Heart right ventricle (tissue), 16 donors: ENCODE measurements at regions of chr1 and their contacts with region 1.

Region 1: GRCh38 chr1:95233737-95234500 is at the start of gene RWDD3:
- DNase-seq: peak; percentile 94 to 96
- ATAC-seq: peak; percentile 95 to 98 (median 96)
- H3K4me3 ChIP-seq: peak within 1 kb of the TSS; percentile 67 to 94 (median 90)
- H3K27ac ChIP-seq: peak within 1 kb of the TSS; percentile 74 to 95 (median 92)
- H3K4me1 ChIP-seq: peaks cover 0 to 77% (median 46%) of the 10 kb centered on the region in 9 donors
- H3K27me3 ChIP-seq: no peaks in the 10 kb centered on the region
- CTCF ChIP-seq: peak; percentile 82 to 100 (median 96)
- total RNA-seq, gene RWDD3: 14.8 to 23.2 (median 18.3) TPM

Region 2: GRCh38 chr1:94854458-94855306 is 379.2 kb before region 1 on chr1:
- intact Hi-C with region 1: loop called in 3 of 10 experiments (anchors 5 to 10 kb)
- DNase-seq: peak; percentile 80 to 91
- ATAC-seq: peak; percentile 93 to 97 (median 95)
- H3K4me3 ChIP-seq: peak overlapping the region in 9 of 10 donors; percentile 18 to 56 (median 50)
- H3K27ac ChIP-seq: peak overlapping the region; percentile 14 to 81 (median 74)
- H3K4me1 ChIP-seq: peaks cover 0 to 45% (median 15%) of the 10 kb centered on the region in 9 donors
- H3K27me3 ChIP-seq: no peaks in the 10 kb centered on the region
- CTCF ChIP-seq: peak; percentile 81 to 98 (median 93)

Region 3: GRCh38 chr1:95072532-95073419 is 161.1 kb before region 1 on chr1 and contains the start of gene ALG14:
- intact Hi-C with region 1: loop called in 7 of 10 experiments (anchors 1 to 5 kb)
- DNase-seq: peak; percentile 92 to 96
- ATAC-seq: peak; percentile 98 to 99 (median 99)
- H3K4me3 ChIP-seq: peak within 1 kb of the TSS; percentile 36 to 76 (median 66)
- H3K27ac ChIP-seq: peak within 1 kb of the TSS; percentile 79 to 95 (median 91)
- H3K4me1 ChIP-seq: peaks cover 0 to 17% (median 10%) of the 10 kb centered on the region in 9 donors
- H3K27me3 ChIP-seq: peaks cover 0 to 4% (median 0%) of the 10 kb centered on the region in 7 donors
- CTCF ChIP-seq: no peak
- total RNA-seq, gene ALG14: 1.8 to 4.6 (median 3.5) TPM

Region 4: DNA sequence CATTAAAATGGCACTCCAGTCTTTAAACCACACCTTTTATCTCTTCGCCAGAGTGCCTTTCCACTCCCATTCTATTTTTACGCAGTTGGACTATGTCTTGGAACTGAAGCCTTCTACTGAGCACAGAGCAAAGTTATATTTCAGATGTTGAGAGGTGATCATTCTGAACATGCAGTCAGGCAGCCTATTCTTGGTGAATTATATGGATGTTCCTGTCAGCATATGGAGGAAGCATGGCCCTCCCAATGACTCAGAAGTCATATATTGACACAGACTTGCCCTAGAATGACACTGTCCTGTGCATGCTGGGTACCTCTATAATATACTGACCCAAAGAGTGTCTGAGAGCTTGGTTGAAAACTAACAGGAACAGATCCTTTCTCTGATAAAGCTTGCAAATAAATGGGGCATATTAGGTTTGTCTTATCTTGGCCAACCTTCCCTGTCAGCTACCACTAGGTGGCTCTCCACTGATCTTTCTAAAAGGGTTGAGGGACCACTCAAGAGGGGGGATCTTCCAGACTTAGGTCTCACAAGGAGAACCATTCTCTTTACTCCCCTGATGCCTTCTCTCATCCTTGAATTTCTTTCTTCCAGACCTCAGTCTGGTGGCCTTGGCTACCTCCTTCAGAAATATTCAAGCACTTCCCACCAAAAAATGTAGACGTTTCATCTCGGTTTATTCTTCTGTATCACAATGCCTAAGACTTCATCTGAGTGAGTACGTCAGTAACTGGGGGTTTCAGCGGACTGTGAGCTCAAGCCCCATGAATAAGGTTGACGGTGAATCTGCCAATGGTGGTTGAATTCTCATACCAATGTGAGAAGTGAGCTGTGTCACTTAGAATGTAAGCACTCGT is 149.4 kb before region 1 on chr1:
- intact Hi-C with region 1: loop called in 6 of 10 experiments (anchors 1 to 5 kb)
- DNase-seq: no peak
- ATAC-seq: peak in 6 of 8 donors; percentile 20 to 59 (median 40)
- H3K4me3 ChIP-seq: no peak overlapping the region
- H3K27ac ChIP-seq: peak overlapping the region in 5 of 10 donors; percentile 60 to 89 (median 67)
- H3K4me1 ChIP-seq: peaks cover 0 to 30% (median 14%) of the 10 kb centered on the region in 9 donors
- H3K27me3 ChIP-seq: no peaks in the 10 kb centered on the region
- CTCF ChIP-seq: peak; percentile 13 to 66 (median 52)

Region 5: GRCh38 chr1:95116580-95117206 is 117.2 kb before region 1 on chr1:
- intact Hi-C with region 1: loop called in 6 of 10 experiments (anchors 2 to 10 kb)
- DNase-seq: peak; percentile 38 to 56
- ATAC-seq: peak; percentile 59 to 89 (median 80)
- H3K4me3 ChIP-seq: peak overlapping the region; percentile 57 to 82 (median 70)
- H3K27ac ChIP-seq: peak overlapping the region; percentile 68 to 93 (median 82)
- H3K4me1 ChIP-seq: peaks cover 0 to 33% (median 14%) of the 10 kb centered on the region in 9 donors
- H3K27me3 ChIP-seq: peaks cover 0 to 67% (median 3%) of the 10 kb centered on the region in 7 donors
- CTCF ChIP-seq: peak; percentile 18 to 69 (median 53)

Region 6: DNA sequence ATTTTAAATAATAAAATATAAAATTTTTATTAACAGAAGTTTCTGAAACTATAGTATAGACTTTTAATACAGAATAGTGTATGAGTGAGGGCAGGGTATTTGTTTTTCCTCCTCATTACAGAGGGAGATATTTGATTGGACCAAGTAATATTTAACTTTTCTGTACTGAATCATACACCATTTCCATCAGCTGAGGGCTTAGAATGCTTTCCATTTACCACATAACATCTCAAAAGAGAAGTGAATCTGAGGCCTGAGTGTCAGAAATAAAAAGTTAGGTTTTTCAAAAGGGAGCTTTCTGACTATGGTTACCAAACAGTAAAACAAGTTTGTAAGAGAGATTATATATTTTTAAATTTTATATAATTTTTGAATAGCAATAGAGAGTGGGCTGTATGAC is 87.3 kb before region 1 on chr1:
- intact Hi-C with region 1: no loop called
- DNase-seq: no peak
- ATAC-seq: no peak
- H3K4me3 ChIP-seq: no peak overlapping the region
- H3K27ac ChIP-seq: no peak overlapping the region
- H3K4me1 ChIP-seq: no peaks in the 10 kb centered on the region
- H3K27me3 ChIP-seq: no peaks in the 10 kb centered on the region
- CTCF ChIP-seq: no peak

Region 7: DNA sequence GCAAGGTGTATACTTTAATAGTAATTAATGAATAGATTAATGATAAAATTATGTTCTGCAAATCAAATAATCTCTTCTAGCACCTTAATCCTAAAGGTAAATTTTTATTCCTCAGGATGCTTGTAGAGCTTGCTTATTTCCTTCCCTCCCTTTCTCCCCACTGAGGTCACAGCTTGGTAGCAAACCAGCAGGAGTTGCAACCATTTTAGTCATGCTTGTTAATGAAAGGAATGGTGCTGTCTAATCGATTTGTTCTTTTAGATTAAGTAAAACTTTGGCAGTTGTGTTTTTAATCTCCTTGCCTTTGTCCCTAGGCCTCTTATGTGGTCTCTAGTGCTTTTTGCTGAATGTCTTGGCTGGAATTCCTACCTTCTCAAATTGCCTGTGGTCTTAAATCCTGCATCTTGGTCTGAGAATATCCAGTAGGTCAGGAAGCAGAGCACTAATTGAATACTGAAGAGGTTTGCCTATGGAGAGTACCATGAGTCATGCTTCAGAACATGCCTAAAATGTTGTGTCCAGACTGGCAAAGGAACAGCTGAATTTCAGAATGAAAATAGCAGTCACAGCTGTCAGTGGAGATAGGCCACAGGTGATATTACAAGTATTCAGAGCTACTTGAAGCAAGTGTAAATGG is 36.2 kb before region 1 on chr1:
- intact Hi-C with region 1: loop called in 1 of 10 experiments (anchors 2 kb)
- DNase-seq: no peak
- ATAC-seq: peak in 6 of 8 donors; percentile 48 to 80 (median 68)
- H3K4me3 ChIP-seq: peak overlapping the region in 4 of 10 donors; percentile 11 to 16 (median 14)
- H3K27ac ChIP-seq: peak overlapping the region in 8 of 10 donors; percentile 18 to 83 (median 72)
- H3K4me1 ChIP-seq: peaks cover 0 to 50% (median 25%) of the 10 kb centered on the region in 9 donors
- H3K27me3 ChIP-seq: no peaks in the 10 kb centered on the region
- CTCF ChIP-seq: no peak

Region 8: GRCh38 chr1:95388031-95388430 is 154.1 kb after region 1 on chr1:
- intact Hi-C with region 1: no loop called
- DNase-seq: no peak
- ATAC-seq: no peak
- H3K4me3 ChIP-seq: no peak overlapping the region
- H3K27ac ChIP-seq: no peak overlapping the region
- H3K4me1 ChIP-seq: no peaks in the 10 kb centered on the region
- H3K27me3 ChIP-seq: no peaks in the 10 kb centered on the region
- CTCF ChIP-seq: no peak